Activated CD4-positive, alpha-beta memory T cell treated with anti-CD3 and anti-CD28 coated beads, Interleukin-2, amount 10 ng/mL, durations not matched to agents 7 days and 5 days (primary cell): ENCODE measurements at regions of chr12 and their contacts with region 1.

Region 1: DNA sequence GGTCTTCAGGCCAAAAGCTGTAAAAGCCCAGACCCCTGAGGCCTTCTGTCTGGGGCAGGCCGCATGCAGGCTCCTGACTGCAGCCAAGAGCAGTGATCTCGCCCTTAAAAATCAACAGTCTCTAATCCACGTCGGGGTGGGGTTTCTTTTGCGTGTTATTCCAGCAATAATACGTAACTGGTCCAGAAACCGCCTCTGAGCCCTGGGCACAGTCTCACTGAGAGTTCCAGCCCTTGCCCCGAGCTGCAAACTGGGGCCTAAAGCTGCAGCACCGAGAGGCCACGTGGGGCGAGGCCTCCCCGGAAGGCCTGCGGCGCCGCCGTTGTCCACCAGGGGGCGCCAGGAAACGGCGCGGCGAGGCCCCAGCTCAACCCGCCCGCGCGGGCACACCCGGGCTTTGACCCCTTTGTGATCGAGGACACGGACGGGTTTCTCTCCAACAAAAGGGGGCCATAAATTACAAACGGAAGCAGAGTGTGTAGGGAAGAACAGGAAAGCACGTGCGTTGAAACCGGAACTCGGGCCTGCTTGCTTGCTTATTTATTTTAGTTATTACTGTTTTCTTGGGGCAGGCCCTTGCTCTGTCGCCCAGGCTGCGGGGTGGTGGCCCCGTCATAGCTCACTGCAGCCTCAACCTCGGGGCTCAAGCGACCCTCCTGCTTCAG is 87.2 kb downstream of the NINJ2 start:
- DNase-seq: peak; percentile 88
- H3K4me3 Mint-ChIP-seq: peak overlapping the region; percentile 19
- H3K27ac Mint-ChIP-seq: peak overlapping the region; percentile 59
- H3K4me1 Mint-ChIP-seq: peaks cover 50% of the 10 kb centered on the region
- H3K27me3 Mint-ChIP-seq: peaks cover 2% of the 10 kb centered on the region

Region 2: DNA sequence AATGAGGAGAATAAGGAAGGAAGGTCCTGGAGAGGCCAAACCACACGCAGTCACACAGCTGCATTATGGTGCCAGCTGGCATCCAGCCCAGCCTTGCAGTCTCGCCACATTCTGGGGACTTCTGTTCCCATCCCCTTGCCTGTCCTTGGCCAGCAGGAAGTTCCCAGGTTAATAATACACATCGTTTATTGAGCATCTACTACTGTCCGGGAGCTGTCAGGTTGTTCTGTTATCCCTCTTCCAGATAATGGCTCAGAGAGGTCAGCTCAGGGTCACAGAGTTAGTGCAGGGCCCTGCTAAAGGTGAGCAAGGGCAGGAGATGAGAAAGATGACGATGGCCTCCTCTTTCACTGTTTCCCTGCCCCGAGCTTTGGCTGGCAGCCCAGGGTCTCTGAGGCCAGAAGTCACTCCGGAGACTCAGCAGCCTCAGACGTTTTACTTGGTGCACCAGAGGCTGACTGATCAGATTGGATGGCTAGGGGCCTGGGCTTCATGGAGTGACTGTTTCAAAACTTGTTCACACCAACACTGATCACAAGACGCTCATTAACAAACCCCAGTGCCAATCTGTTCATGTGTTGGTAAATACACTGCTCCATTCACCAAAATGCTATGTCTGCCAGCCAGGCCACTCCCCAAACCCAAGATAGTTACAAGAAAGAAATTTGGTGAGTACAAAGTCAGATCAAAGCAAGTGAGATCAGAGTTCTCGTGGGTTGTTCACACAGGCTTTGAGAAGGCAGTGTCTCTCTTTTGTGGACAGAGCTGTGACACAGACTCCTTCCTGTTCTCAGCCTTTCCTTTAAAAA is 37.1 kb before region 1 on chr12:
- CTCF ChIA-PET with region 1: no interaction called
- POLR2A ChIA-PET with region 1: no interaction called
- DNase-seq: no peak
- H3K4me3 Mint-ChIP-seq: no peak overlapping the region
- H3K27ac Mint-ChIP-seq: peak overlapping the region; percentile 41
- H3K4me1 Mint-ChIP-seq: peaks cover 8% of the 10 kb centered on the region
- H3K27me3 Mint-ChIP-seq: no peaks in the 10 kb centered on the region

Region 3: DNA sequence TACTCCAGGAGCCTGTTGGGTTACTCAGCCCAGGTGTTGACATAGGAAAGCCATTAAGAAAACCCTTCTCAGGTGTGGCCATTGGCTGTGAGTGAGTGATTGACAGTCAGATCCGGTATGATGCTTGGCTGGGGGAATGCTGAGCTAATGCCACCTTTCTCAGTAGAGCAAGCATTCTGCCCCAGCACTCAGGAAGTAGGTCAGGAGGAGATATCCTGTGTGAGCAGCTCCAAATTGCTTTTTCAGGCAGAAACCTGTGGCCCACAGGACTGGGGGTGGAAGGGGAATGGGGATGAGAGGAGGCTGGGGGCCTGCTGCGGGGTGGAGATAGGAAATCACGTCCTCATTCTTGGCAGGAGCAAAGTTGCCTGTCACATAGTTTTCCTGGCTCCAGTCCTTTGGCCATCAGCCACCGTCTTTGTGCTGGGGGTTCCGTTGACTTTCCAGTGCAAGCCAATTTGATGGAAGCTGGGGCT is 31.5 kb after region 1 on chr12:
- CTCF ChIA-PET with region 1: interaction called, 41 read pairs
- POLR2A ChIA-PET with region 1: no interaction called
- DNase-seq: peak; percentile 38
- H3K4me3 Mint-ChIP-seq: no peak overlapping the region
- H3K27ac Mint-ChIP-seq: peak overlapping the region; percentile 80
- H3K4me1 Mint-ChIP-seq: peaks cover 51% of the 10 kb centered on the region
- H3K27me3 Mint-ChIP-seq: no peaks in the 10 kb centered on the region

Region 4: GRCh38 chr12:662566-663292 is 86.6 kb after region 1 on chr12:
- CTCF ChIA-PET with region 1: interaction called, 12 read pairs
- POLR2A ChIA-PET with region 1: interaction called, 4 read pairs
- DNase-seq: no peak
- H3K4me3 Mint-ChIP-seq: peak overlapping the region; percentile 69
- H3K27ac Mint-ChIP-seq: peak overlapping the region; percentile 71
- H3K4me1 Mint-ChIP-seq: peaks cover 46% of the 10 kb centered on the region
- H3K27me3 Mint-ChIP-seq: no peaks in the 10 kb centered on the region

Region 5: DNA sequence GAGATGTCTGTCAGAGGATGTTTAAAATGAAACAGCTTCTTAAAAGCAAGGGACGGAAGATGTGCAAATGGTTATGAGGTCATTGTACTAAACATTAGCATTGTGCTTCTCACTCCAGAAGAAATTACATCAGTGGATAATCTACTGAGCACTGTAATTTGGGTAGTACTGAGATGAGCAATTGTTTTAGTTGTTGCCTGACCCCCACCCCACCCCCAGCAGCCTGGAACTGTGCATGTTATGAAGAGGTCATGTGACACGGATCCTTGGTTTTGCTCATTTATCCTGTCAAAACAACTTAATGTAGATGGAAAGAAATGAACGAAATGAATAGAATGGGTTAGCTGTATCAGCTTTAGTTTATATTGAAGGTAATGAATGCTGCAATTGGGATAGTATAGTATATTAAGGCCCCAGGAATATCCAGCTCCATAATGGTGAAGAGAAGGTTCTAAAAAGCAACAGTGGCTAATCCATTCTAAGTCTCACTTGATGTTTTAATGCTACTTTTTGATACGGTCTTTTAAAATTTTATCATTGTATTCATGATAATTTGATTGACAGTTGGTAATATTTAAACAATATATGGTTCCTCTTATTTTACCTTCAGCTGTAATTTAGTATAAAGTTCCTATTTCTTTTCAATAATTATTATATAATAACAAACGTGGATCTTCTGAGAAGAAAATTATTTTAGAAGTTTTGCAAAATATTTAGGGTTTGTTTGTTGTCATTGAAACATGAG is 234.8 kb after region 1 on chr12:
- CTCF ChIA-PET with region 1: interaction called, 77 read pairs
- POLR2A ChIA-PET with region 1: interaction called, 6 read pairs
- DNase-seq: peak; percentile 55
- H3K4me3 Mint-ChIP-seq: peak overlapping the region; percentile 25
- H3K27ac Mint-ChIP-seq: peak overlapping the region; percentile 49
- H3K4me1 Mint-ChIP-seq: peaks cover 66% of the 10 kb centered on the region
- H3K27me3 Mint-ChIP-seq: no peaks in the 10 kb centered on the region

Region 6: GRCh38 chr12:949453-950191 is 373.5 kb after region 1 on chr12 and contains the start of gene RAD52:
- CTCF ChIA-PET with region 1: interaction called, 18 read pairs
- POLR2A ChIA-PET with region 1: interaction called, 7 read pairs
- DNase-seq: peak; percentile 98
- H3K4me3 Mint-ChIP-seq: peak within 1 kb of the TSS; percentile 85
- H3K27ac Mint-ChIP-seq: peak within 1 kb of the TSS; percentile 82
- H3K4me1 Mint-ChIP-seq: peaks cover 47% of the 10 kb centered on the region
- H3K27me3 Mint-ChIP-seq: peaks cover 3% of the 10 kb centered on the region
- total RNA-seq, gene RAD52: 14.5 to 14.9 TPM